ENCODE measurements at regions of chr7 and their contacts with region 1.

Region 1: DNA sequence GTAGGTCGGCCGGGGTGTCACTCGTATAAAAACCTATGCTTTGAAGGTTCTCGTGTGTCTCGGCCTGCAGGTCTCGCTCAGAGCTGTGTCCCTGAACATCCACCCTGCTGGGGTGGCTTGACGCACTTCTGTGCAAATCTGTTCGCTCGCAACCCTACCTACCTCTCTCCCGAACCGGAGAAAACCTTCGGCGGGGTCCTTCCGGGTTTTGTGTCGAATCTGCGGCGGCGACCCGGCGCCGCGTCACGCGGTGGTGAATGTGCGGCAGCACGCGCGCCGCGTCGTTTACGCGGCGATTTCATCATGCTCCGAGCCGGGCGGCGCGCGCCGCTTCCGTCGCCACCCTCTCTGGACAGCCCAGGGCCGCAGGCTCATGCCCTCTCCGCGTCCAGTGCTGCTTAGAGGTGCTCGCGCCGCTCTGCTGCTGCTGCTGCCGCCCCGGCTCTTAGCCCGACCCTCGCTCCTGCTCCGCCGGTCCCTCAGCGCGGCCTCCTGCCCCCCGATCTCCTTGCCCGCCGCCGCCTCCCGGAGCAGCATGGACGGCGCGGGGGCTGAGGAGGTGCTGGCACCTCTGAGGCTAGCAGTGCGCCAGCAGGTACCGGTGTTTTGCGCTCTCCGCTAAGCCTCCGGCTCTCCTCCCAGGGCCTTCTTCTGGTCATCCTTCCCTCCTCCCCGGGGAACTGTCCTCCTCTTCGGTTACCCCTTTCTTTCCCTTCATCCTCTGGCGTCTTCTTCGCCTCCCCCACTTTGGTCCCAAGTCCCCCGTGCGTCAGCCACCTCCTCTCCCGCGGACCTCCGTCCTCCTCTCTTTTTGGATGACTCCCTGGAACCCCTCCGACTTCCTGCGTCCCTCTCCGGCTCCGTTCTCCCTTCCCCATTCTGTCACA is at the start of gene GARS1:
- DNase-seq: peak; percentile 88
- H3K4me3 Mint-ChIP-seq: peak within 1 kb of the TSS; percentile 96
- H3K27ac Mint-ChIP-seq: peak within 1 kb of the TSS; percentile 97
- H3K4me1 Mint-ChIP-seq: peaks cover 49% of the 10 kb centered on the region
- H3K27me3 Mint-ChIP-seq: no peaks in the 10 kb centered on the region
- total RNA-seq, gene GARS1: 367 to 385 TPM

Region 2: DNA sequence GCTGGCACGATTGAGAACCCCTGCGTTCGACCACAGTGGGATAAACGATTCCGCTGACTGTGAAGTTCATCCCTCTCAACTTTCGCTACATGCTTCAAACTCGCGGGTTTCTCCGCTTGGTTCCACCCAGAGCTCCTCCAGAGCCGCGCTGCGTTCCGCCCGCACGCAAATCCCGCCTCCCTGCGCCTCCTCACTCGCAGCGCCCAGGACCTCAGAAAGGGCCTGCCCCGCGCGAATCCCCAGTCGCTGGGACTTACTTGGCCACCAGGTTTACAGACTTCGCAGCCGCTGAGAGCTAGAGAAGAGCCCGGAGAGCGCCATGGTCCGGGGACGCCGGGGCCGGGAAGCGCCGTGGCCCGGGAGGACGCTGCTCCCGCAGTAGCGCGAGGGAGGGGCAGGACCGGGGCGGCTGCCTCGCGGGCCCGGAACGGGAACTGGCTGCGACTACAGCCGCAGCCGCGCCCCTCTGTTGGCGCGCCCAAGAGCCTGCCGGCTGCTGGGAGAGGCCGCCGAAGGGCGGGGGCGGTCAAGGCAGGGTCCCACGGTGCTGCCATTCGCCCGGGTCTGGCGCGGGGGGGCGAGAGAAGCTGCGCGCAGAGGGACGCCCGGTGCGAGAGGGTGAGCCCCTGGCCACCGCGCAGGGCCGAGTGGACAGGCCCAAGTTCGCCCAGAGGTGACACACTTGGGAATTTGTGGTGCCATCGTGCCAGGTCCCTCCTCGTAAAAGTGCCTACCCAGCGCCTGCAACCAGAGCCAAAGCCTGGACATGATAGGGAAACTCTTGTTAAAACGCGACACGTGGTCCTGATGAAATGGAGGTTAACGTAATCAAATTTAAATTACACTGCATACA is 116.2 kb before region 1 on chr7 and contains the start of gene NOD1:
- CTCF ChIA-PET with region 1: no interaction called
- intact Hi-C with region 1: loop called (anchors 1 kb)
- DNase-seq: peak; percentile 73
- H3K4me3 Mint-ChIP-seq: peak within 1 kb of the TSS; percentile 89
- H3K27ac Mint-ChIP-seq: peak within 1 kb of the TSS; percentile 87
- H3K4me1 Mint-ChIP-seq: peaks cover 52% of the 10 kb centered on the region
- H3K27me3 Mint-ChIP-seq: no peaks in the 10 kb centered on the region
- total RNA-seq, gene NOD1: 9.2 to 9.8 TPM

Region 3: DNA sequence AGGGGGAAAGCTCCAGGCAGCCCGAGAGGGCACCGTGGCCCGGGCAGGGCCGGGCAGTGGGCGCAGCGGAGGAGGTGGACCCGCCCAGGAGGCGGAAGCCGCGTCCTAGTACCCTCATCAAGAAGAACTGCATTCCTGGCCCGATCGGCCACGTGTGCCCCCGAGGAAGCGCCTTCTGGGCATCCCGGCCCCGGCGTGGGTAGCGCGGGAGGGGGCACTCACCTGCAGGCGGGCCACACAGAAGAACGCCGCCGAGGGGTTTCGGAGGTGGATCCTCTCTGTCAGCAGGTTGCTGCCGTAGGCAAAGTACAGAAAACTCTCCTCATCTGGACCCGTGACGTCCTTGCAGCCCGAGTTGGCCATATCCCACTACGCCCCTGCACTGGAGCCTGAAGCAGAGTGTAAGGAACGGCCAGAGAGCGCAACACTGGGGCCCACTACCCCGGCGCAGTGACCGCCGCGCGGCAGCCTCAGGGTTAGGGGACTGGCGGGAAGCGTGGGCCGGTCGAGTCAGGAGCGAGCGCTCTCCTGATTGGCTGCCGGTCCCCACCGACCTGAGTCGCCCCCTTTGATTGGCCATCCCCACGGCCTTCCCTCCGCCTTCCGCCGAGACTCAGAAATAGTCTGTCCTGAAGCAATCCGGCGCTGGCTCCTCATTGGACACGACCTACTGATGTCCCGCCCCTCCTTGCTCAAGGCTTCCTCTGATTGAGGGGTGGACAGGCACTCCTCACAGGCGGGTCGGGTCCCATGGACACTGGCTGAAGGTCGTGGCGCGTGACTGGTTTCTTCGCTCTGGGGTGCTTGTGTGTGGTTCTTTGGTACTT is 90.2 kb before region 1 on chr7 and contains the start of gene GGCT:
- CTCF ChIA-PET with region 1: no interaction called
- intact Hi-C with region 1: loop called (anchors 1 kb)
- DNase-seq: peak; percentile 99
- H3K4me3 Mint-ChIP-seq: peak within 1 kb of the TSS; percentile 82
- H3K27ac Mint-ChIP-seq: peak within 1 kb of the TSS; percentile 85
- H3K4me1 Mint-ChIP-seq: peaks cover 38% of the 10 kb centered on the region
- H3K27me3 Mint-ChIP-seq: no peaks in the 10 kb centered on the region
- total RNA-seq, gene GGCT: 83.0 to 83.8 TPM

Region 4: GRCh38 chr7:30612658-30613265 is 18.0 kb after region 1 on chr7:
- CTCF ChIA-PET with region 1: no interaction called
- intact Hi-C with region 1: loop called (anchors 1 kb)
- DNase-seq: no peak
- H3K4me3 Mint-ChIP-seq: no peak overlapping the region
- H3K27ac Mint-ChIP-seq: peak overlapping the region; percentile 66
- H3K4me1 Mint-ChIP-seq: peaks cover 34% of the 10 kb centered on the region
- H3K27me3 Mint-ChIP-seq: no peaks in the 10 kb centered on the region

Region 5: DNA sequence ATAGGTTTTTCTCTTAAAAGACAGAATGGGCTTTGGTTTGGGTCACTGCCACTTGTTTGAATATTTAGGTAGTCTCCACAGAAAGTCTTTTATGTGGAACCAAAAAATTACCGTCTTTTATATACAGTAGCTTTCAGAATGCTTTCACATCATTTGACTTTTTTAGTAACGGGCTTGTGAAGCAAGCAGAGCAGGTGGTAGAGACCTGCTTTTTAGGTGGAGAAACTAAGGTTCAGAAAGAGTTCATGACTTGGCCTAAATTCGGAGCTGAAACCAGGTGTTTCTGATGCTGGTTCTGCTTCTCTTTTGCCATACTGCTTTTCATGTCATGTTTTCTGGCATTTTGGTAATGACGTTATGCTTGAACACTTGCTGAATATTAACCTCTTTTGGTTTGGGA is 36.2 kb after region 1 on chr7:
- CTCF ChIA-PET with region 1: no interaction called
- intact Hi-C with region 1: no loop called
- DNase-seq: no peak
- H3K4me3 Mint-ChIP-seq: no peak overlapping the region
- H3K27ac Mint-ChIP-seq: no peak overlapping the region
- H3K4me1 Mint-ChIP-seq: no peaks in the 10 kb centered on the region
- H3K27me3 Mint-ChIP-seq: no peaks in the 10 kb centered on the region

Region 6: DNA sequence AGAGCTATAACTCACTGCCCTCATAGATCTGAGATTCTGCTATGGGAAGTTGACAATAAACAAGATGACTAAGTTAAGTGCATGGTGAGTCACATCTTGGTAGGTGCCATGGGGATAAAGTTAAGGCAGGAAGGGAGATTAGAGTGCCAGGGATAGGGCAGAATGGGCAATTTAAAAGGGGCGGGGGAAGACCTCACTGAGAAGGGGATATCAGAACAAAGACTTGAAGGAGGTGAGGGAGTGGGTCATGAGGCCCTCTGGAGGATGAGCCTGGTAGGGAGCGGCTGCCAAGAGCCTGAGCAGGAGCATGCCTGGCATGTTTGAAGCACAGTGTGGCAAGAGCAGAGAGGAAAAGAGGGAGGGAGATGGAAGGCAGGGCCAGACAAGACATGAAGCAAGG is 122.4 kb after region 1 on chr7:
- CTCF ChIA-PET with region 1: no interaction called
- intact Hi-C with region 1: no loop called
- DNase-seq: no peak
- H3K4me3 Mint-ChIP-seq: no peak overlapping the region
- H3K27ac Mint-ChIP-seq: no peak overlapping the region
- H3K4me1 Mint-ChIP-seq: no peaks in the 10 kb centered on the region
- H3K27me3 Mint-ChIP-seq: no peaks in the 10 kb centered on the region

Region 7: DNA sequence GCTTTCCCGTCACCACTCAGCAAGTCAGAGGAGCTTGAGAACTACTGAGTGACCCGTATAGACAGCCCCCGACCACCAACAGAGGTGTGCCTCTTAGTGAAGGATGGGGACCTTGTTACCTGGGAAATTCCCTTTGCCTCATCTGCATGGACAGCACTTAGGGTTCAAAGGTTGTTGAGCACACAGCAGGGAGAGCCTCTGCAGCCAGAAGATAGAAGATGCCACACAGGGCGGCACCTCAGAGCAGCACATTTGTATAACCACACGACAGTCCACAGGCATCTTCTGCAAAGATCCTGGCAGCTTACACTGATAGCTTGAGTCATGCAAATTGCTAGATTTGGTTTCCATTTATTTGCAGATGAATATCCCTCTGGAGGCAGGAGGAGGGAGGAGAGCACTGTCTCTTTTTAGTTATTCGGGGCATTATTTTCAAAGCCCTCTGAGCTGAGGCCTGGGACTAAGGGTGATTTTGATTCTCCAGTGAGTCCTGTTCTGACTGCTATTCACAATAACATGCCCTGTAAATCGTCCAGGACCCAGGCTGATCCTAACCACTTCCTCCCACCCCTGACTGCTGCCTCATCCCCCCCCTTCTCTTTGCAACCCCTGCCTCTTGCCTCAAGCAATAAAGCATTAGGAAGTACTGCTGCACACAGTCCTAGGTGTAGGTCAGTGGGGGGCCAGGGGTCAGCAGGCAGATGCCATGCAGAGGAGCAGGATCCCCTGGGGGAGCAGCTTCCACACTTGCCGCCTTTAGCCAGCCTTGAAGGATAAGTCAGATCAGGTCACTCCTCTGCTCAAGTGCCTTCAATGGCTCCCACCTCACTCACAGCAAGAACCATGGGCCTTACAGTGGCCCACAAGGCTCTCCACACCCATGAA is 132.5 kb after region 1 on chr7:
- CTCF ChIA-PET with region 1: no interaction called
- intact Hi-C with region 1: loop called (anchors 1 kb)
- DNase-seq: peak; percentile 75
- H3K4me3 Mint-ChIP-seq: peak overlapping the region; percentile 77
- H3K27ac Mint-ChIP-seq: peak overlapping the region; percentile 89
- H3K4me1 Mint-ChIP-seq: peaks cover 54% of the 10 kb centered on the region
- H3K27me3 Mint-ChIP-seq: no peaks in the 10 kb centered on the region

Region 8: DNA sequence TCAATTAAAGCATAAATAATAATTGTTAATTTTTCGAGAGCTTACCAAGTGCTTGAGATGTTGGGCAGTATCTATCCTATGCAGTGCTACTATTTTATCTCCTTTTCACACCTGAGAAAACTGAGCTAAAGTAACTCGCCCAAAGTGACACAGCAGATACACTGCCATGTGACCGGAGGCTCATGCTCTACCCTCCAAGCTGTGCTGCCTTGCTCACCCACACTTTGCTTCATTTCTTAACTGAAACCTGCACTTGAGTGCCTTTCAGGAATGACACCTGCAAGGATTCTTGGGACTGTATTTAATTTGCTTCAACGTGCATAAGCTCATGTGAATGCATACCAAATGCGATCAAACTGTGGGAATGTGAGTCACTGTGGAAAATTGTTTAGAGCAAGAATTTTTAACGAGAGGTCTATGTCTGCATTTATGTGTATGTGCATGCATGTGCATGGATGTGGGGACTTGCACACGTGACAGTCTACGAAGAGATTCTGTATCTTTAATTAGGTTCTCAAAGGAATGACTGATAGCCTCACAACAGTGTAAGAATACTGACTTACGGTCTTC is 576.5 kb after region 1 on chr7:
- CTCF ChIA-PET with region 1: no interaction called
- intact Hi-C with region 1: no loop called
- DNase-seq: no peak
- H3K4me3 Mint-ChIP-seq: no peak overlapping the region
- H3K27ac Mint-ChIP-seq: no peak overlapping the region
- H3K4me1 Mint-ChIP-seq: no peaks in the 10 kb centered on the region
- H3K27me3 Mint-ChIP-seq: peaks cover 4% of the 10 kb centered on the region

Measured in activated naive CD4-positive, alpha-beta T cell treated with anti-CD3 and anti-CD28 coated beads for 36 hours (primary cell).